Lower lobe of right lung (tissue), 2 donors: ENCODE measurements at regions of chr20 and their contacts with region 1.

Region 1: GRCh38 chr20:19784511-19785172 is 26.6 kb downstream of the RIN2 start:
- DNase-seq: peak; percentile 75
- ATAC-seq: peak; percentile 92 to 93
- H3K4me3 ChIP-seq: no peak overlapping the region
- H3K27ac ChIP-seq: peak overlapping the region; percentile 61
- H3K4me1 ChIP-seq: peaks cover 41% of the 10 kb centered on the region
- H3K27me3 ChIP-seq: no peaks in the 10 kb centered on the region
- CTCF ChIP-seq: peak; percentile 72

Region 2: DNA sequence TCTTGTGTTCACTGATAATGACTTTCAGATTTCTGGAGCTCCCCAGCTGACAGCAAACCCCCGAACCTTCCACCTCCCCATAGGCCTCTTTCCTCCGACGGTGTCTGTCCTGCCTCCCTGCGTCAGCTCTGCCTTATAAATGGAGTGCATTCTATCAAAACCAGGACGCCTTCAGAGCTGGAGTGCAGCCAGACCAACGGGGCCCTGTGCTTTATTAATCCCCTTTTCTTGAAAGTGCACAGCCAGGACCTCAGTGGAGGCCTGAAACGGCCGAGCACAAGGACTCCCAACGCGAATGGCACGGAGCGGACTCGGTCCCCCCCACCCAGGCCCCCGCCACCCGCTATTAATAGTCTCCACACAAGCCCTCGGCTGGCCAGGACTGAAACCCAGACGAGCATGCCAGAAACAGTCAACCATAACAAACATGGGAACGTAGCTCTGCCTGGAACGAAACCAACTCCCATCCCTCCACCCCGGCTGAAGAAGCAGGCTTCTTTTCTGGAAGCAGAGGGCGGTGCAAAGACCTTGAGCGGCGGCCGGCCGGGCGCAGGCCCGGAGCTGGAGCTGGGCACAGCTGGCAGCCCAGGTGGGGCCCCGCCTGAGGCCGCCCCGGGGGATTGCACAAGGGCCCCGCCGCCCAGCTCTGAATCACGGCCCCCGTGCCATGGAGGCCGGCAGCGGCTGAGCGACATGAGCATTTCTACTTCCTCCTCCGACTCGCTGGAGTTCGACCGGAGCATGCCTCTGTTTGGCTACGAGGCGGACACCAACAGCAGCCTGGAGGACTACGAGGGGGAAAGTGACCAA is 190.2 kb after region 1 on chr20:
- intact Hi-C with region 1: loop called (anchors 10 kb)
- DNase-seq: peak; percentile 91
- ATAC-seq: peak; percentile 87 to 92
- H3K4me3 ChIP-seq: peak overlapping the region; percentile 66
- H3K27ac ChIP-seq: peak overlapping the region; percentile 89
- H3K4me1 ChIP-seq: peaks cover 94% of the 10 kb centered on the region
- H3K27me3 ChIP-seq: no peaks in the 10 kb centered on the region
- CTCF ChIP-seq: no peak